ENCODE measurements at regions of chr10 and their contacts with region 1.

Region 1: GRCh38 chr10:13299437-13300287 is at the start of gene PHYH:
- DNase-seq: peak; percentile 75 to 79 (median 78)
- H3K4me3 ChIP-seq: peak within 1 kb of the TSS; percentile 49 to 77 (median 62)
- H3K4me3 Mint-ChIP-seq: peak within 1 kb of the TSS; percentile 89 to 96
- H3K27ac ChIP-seq: peak within 1 kb of the TSS; percentile 71 to 81
- H3K27ac Mint-ChIP-seq: peak within 1 kb of the TSS; percentile 73 to 92 (median 81)
- H3K4me1 ChIP-seq: peaks cover 22 to 33% of the 10 kb centered on the region in 2 donors
- H3K4me1 Mint-ChIP-seq: peaks cover 25% of the 10 kb centered on the region
- H3K27me3 ChIP-seq: no peaks in the 10 kb centered on the region
- H3K27me3 Mint-ChIP-seq: peaks cover 0 to 5% (median 4%) of the 10 kb centered on the region in 3 donors
- CTCF ChIP-seq: no peak
- polyA plus RNA-seq, gene PHYH: 5.5 to 19.6 (median 19.5) TPM

Region 2: DNA sequence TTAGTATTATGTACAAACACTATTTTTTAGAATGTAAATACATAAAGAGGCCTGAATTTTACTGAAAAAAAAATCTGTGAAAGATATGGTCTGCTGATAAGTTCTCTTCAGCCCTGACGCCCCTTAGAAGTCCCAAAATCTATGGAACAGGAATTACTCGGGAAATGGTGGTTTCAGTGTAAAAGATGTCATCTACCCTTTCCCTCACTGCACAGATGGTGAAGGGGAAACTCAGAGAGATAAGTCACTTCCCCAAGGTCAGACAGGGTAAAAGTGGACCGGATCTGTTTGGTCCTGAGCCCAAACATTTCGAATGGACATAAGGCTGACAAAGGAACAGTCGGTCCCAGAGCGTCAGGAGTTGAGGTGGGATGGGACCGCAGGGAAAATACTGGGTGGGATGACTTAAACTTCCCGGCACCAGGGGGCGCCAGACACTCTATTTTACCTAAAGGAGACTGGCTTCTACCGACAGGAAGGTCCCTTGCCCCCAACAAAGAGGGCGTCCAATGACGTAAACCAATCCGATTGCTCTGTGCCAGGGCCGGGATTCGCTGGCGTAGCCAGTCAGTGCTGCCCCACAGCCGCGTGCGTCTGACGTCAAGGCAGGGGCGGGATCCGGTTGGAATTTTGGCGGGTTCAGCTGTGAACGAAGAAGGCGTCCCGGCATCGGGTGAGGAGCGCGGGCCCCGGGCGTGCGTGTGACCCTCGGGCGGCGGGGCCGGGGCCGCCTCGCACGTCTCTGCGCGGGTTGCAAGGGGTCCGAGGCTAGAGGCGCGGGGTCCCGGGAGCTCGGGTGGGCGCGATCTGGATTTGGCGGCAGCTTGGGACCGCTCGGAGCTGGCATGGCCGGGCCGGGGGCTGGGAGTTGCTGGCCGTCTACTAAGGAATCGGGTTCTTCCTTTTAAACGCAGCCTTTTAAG is 138.5 kb before region 1 on chr10 and contains the start of gene MCM10:
- intact Hi-C with region 1: loop called (anchors 2 to 5 kb)
- DNase-seq: peak; percentile 96 to 100 (median 98)
- H3K4me3 ChIP-seq: peak within 1 kb of the TSS; percentile 14 to 71 (median 23)
- H3K4me3 Mint-ChIP-seq: peak within 1 kb of the TSS; percentile 76 to 89
- H3K27ac ChIP-seq: no peak within 1 kb of the TSS
- H3K27ac Mint-ChIP-seq: peak within 1 kb of the TSS in 5 of 7 donors; percentile 19 to 89 (median 77)
- H3K4me1 ChIP-seq: peaks cover 14 to 21% of the 10 kb centered on the region in 2 donors
- H3K4me1 Mint-ChIP-seq: peaks cover 19% of the 10 kb centered on the region
- H3K27me3 ChIP-seq: no peaks in the 10 kb centered on the region
- H3K27me3 Mint-ChIP-seq: peaks cover 2 to 8% (median 7%) of the 10 kb centered on the region in 3 donors
- CTCF ChIP-seq: peak; percentile 90
- polyA plus RNA-seq, gene MCM10: not detected

Region 3: GRCh38 chr10:13348216-13349017 is 48.8 kb after region 1 on chr10 and contains the start of gene SEPHS1:
- intact Hi-C with region 1: loop called in 1 of 2 experiments (anchors 5 kb)
- DNase-seq: peak in 1 of 3 donors; percentile 32
- H3K4me3 ChIP-seq: peak within 1 kb of the TSS; percentile 48 to 82 (median 64)
- H3K4me3 Mint-ChIP-seq: peak within 1 kb of the TSS; percentile 88 to 95
- H3K27ac ChIP-seq: peak within 1 kb of the TSS; percentile 48 to 73
- H3K27ac Mint-ChIP-seq: peak within 1 kb of the TSS; percentile 30 to 83 (median 72)
- H3K4me1 ChIP-seq: peaks cover 33 to 40% of the 10 kb centered on the region in 2 donors
- H3K4me1 Mint-ChIP-seq: peaks cover 38% of the 10 kb centered on the region
- H3K27me3 ChIP-seq: peaks cover 3 to 24% of the 10 kb centered on the region in 2 donors
- H3K27me3 Mint-ChIP-seq: peaks cover 19 to 34% (median 29%) of the 10 kb centered on the region in 3 donors
- CTCF ChIP-seq: no peak
- polyA plus RNA-seq, gene SEPHS1: 11.9 to 16.3 (median 15.1) TPM

Measured in CD14-positive monocyte (primary cell).